SK-N-SH (cell line): ENCODE measurements at regions of chr1 and their contacts with region 1.

Region 1: DNA sequence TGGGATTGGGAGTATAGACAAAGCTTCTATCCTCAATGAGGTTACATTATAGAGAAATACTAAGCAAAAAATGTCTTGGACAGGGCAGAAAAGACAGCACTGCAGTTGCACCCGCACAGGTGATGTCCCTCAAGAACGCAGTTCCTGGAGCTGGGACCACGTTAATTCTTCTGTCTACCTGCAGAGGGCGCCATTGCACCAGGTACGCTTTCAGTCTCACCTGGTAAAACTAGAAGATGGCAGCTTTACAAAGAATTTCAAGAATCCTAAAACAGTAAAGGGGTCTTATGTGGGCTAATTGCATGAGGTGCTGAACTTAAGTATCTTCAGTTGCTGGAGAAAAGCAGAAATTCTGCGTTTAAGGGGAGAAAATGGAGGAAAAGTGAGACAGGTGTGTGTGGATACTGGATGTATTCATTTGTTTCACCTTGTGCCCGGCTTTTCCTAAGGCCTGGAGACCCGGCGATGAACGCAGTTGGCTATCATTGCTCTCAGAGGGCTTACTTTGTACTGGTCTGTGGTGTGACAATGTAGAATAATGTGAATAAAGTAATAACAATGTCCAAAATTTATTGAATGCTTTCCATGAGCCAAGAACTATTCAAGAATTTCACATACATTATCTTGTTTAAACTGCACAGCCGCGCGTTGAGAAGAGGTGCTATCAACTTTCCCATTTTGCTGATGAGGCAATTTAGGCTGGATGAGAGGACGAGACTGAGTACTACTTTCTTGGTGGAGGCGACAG is 276.3 kb upstream of the GREM2 start:
- DNase-seq: peak; percentile 62
- H3K4me3 ChIP-seq: peak overlapping the region in 1 of 2 experiments; percentile 53; a peak in 1 of 4 replicates
- H3K27ac ChIP-seq: no peak overlapping the region
- H3K4me1 ChIP-seq: no peaks in the 10 kb centered on the region; a peak in 1 of 4 replicates
- H3K27me3 ChIP-seq: no peaks in the 10 kb centered on the region
- CTCF ChIP-seq: peak; percentile 82
- EP300 ChIP-seq: no peak
- RAD21 ChIP-seq: peak; percentile 89

Region 2: DNA sequence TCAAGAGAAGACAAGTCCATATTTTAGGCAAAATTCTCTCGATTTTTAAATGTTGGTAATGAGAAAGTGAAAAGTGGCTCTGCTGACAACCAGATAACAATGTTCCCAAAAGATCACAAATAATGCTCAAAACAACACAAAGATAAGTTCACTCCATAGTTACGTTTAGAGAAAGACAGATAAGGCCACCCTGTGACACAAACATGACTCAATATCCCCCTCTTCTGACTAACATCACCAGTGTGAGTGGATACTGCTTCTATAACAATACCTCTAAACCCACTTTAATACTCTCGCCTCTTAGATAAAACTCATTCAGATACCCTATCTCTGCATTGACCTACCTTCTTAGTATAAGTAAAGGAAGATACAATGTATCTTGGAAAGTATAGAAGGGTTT is 520.0 kb after region 1 on chr1:
- CTCF ChIA-PET with region 1: interaction called, 17 read pairs
- POLR2A ChIA-PET with region 1: no interaction called
- DNase-seq: peak; percentile 23
- H3K4me3 ChIP-seq: no peak overlapping the region
- H3K27ac ChIP-seq: no peak overlapping the region
- H3K4me1 ChIP-seq: peaks cover 0 to 2% of the 10 kb centered on the region in 2 experiments; a peak in 2 of 4 replicates
- H3K27me3 ChIP-seq: no peaks in the 10 kb centered on the region
- CTCF ChIP-seq: peak; percentile 27
- EP300 ChIP-seq: no peak
- RAD21 ChIP-seq: peak; percentile 75

Region 3: GRCh38 chr1:241485554-241485992 is 597.4 kb after region 1 on chr1:
- CTCF ChIA-PET with region 1: interaction called, 25 read pairs
- POLR2A ChIA-PET with region 1: no interaction called
- DNase-seq: peak; percentile 17
- H3K4me3 ChIP-seq: no peak overlapping the region
- H3K27ac ChIP-seq: no peak overlapping the region
- H3K4me1 ChIP-seq: peaks cover 0 to 24% of the 10 kb centered on the region in 2 experiments; a peak in 3 of 4 replicates
- H3K27me3 ChIP-seq: no peaks in the 10 kb centered on the region
- CTCF ChIP-seq: peak; percentile 55
- EP300 ChIP-seq: no peak
- RAD21 ChIP-seq: peak; percentile 44